Calu3 (cell line): ENCODE measurements at regions of chr3 and their contacts with region 1.

Region 1: GRCh38 chr3:66797889-66798560 is 200.1 kb upstream of the KBTBD8 start:
- DNase-seq: no peak
- H3K4me3 Mint-ChIP-seq: no peak overlapping the region
- H3K27ac Mint-ChIP-seq: no peak overlapping the region
- H3K4me1 Mint-ChIP-seq: no peaks in the 10 kb centered on the region
- H3K27me3 Mint-ChIP-seq: no peaks in the 10 kb centered on the region
- CTCF ChIP-seq: no peak

Region 2: DNA sequence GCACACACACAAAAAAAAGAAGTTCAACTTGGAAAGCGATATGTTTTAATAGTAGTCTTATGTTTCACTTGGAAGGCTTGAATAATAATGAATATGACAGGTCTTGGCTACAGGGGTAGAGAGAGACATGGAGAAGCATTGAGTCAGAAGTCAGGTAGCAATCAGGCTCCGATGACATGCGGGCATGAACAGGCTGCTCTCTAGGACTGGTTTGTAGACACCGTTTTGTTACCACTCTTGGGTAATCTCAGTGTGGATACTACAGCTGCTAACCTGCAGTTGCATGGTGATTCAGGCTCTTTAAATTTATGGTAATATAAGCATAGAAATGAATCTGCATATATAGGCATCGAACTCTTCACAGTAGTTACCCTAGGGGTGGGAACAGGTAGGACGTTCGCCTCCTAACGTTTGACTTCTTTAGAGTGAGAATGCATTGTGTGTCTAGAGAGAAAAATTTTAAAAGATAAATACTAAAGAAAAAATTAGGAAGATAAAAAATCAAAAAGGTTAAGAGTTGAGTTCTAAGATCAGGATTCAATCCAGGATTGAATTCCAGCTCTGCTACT is 41.5 kb before region 1 on chr3:
- CTCF ChIA-PET with region 1: no interaction called
- intact Hi-C with region 1: no loop called
- DNase-seq: no peak
- H3K4me3 Mint-ChIP-seq: no peak overlapping the region
- H3K27ac Mint-ChIP-seq: no peak overlapping the region
- H3K4me1 Mint-ChIP-seq: no peaks in the 10 kb centered on the region
- H3K27me3 Mint-ChIP-seq: no peaks in the 10 kb centered on the region
- CTCF ChIP-seq: no peak

Region 3: GRCh38 chr3:67090474-67090873 is 292.4 kb after region 1 on chr3:
- CTCF ChIA-PET with region 1: no interaction called
- intact Hi-C with region 1: no loop called
- DNase-seq: no peak
- H3K4me3 Mint-ChIP-seq: no peak overlapping the region
- H3K27ac Mint-ChIP-seq: no peak overlapping the region
- H3K4me1 Mint-ChIP-seq: no peaks in the 10 kb centered on the region
- H3K27me3 Mint-ChIP-seq: no peaks in the 10 kb centered on the region
- CTCF ChIP-seq: no peak

Region 4: DNA sequence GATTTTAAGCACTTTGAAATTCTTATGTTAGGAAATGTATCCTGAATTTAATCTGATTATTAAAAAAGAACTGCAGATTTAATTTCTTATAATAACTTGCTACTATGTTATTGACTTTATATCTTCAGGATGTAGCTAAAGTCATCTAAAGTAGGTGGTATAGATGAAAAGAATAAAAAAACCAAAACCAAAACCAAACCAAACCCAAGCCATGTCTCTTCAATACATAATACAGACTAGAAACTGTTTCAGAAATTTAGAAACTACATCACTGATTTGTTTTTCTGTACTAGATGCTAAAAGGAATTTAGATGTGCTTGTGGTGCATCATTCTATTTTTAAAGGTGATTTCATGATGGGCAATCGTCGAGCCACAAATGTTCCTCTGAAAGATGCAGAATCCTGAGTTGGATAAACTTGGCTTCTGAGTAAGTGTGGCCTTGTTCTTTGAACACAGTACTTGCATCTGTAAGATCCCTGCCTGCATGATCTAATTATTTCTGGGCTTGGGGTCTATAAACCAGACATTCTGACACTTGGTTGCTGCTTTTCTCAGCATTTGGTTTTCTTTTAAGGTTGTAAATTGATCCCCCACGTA is 1143.5 kb after region 1 on chr3:
- CTCF ChIA-PET with region 1: interaction called, 13 read pairs
- intact Hi-C with region 1: no loop called
- DNase-seq: no peak
- H3K4me3 Mint-ChIP-seq: no peak overlapping the region
- H3K27ac Mint-ChIP-seq: no peak overlapping the region
- H3K4me1 Mint-ChIP-seq: no peaks in the 10 kb centered on the region
- H3K27me3 Mint-ChIP-seq: no peaks in the 10 kb centered on the region
- CTCF ChIP-seq: no peak